ENCODE measurements at regions of chr6 and their contacts with region 1.

Region 1: DNA sequence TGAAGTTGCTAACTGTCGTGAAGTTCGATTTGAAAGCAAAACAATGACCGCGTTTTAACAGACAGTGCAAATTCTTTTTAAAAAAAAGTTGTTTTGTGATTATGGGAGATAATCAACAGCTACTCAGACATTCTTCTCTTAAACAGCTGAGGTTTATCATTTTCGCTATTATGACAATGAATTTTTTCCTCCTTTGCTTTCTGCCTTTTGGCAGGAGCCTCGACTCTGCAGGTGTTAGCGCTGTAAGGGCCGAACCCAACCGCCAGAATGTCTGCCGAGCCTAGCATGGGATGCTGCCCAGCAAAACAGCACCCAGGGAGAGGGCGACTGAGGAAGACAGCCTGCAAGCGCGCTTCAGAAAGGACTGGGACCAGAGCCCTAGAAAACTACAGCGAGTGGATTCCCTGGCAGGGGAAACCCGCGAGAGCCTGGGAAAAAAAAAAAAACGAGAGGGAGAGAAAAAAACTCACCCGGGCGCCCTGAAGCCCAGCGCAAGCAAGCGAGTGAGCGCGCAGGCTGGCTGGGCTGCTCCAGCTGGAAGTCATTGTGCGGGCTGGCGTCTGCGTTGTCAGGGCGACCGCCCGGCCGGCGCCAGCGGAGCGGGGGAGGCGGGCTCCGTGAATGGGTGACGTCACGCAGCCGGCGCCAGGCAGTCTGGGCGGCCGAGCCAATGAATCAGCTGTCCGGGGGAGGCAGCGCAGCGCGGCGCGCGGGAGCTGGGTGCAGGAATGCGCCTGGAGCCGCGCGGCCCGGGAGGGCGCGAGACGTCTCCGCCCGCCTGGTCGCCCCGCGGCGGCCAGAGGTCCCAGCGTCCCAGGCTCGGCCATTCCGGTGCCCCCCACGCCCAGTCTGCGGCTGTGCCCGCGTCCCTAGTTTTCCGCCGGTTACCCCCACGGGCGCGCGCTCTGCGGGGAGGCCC is 32.7 kb upstream of the ID4 start:
- DNase-seq: peak; percentile 96 to 98
- ATAC-seq: peak; percentile 99
- H3K4me3 ChIP-seq: peak overlapping the region; percentile 41 to 52
- H3K27ac ChIP-seq: peak overlapping the region; percentile 94 to 98
- H3K4me1 ChIP-seq: peaks cover 1 to 4% of the 10 kb centered on the region in 2 donors
- H3K27me3 ChIP-seq: no peaks in the 10 kb centered on the region

Region 2: DNA sequence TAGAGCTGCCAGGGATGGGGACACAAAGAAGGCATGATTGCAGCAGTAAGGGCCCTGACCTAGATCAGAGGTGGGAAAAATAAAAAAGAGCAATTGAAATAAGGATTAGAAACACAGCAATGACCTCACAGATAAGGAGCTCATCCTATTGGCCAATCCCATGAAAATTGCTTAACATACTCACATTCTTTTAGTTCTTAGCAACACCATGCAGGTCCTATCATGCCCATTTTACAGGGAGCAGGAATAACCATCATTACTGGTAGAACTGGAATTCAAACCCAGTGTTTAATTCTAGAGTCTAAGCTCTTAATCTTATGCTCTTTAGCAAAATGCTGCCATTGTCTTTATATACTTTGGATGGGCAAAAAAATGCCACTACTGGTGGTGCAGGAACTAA is 1149.6 kb before region 1 on chr6:
- intact Hi-C with region 1: no loop called
- DNase-seq: no peak
- ATAC-seq: no peak
- H3K4me3 ChIP-seq: no peak overlapping the region
- H3K27ac ChIP-seq: no peak overlapping the region
- H3K4me1 ChIP-seq: no peaks in the 10 kb centered on the region
- H3K27me3 ChIP-seq: no peaks in the 10 kb centered on the region

Region 3: GRCh38 chr6:19836799-19837510 is 32.5 kb after region 1 on chr6 and contains the start of gene ID4:
- intact Hi-C with region 1: loop called (anchors 1 to 5 kb)
- DNase-seq: peak; percentile 97 to 99
- ATAC-seq: peak; percentile 95
- H3K4me3 ChIP-seq: peak within 1 kb of the TSS; percentile 64 to 95
- H3K27ac ChIP-seq: peak within 1 kb of the TSS; percentile 96 to 100
- H3K4me1 ChIP-seq: no peaks in the 10 kb centered on the region
- H3K27me3 ChIP-seq: no peaks in the 10 kb centered on the region
- total RNA-seq, gene ID4: 85.1 to 111 TPM

Region 4: GRCh38 chr6:19860235-19860877 is 55.9 kb after region 1 on chr6:
- intact Hi-C with region 1: no loop called
- DNase-seq: no peak
- ATAC-seq: no peak
- H3K4me3 ChIP-seq: no peak overlapping the region
- H3K27ac ChIP-seq: no peak overlapping the region
- H3K4me1 ChIP-seq: no peaks in the 10 kb centered on the region
- H3K27me3 ChIP-seq: no peaks in the 10 kb centered on the region

Region 5: GRCh38 chr6:19976411-19977129 is 172.1 kb after region 1 on chr6:
- intact Hi-C with region 1: no loop called
- DNase-seq: no peak
- ATAC-seq: no peak
- H3K4me3 ChIP-seq: no peak overlapping the region
- H3K27ac ChIP-seq: no peak overlapping the region
- H3K4me1 ChIP-seq: no peaks in the 10 kb centered on the region
- H3K27me3 ChIP-seq: no peaks in the 10 kb centered on the region

Measured in aorta (tissue), 5 donors.